Calu3 (cell line): ENCODE measurements at regions of chr10 and their contacts with region 1.

Region 1: DNA sequence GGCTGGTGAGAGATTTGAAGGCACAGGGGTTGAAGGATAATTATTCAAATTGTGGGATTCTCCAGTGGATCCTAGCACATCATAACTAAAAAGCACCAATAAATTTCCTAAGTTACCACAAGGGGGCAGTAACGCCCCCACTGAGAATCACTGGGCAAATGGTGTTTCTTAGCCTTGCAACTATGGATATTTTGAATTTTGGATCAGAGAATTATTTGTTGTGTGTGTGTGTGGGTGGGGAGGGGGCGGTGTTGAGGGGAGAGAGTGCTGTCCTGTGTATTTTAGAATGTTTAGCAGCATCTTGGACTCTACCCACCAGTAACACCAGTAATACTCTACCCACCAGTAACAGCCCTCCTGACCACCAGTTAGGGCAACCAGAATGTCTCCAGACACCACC is 63.3 kb upstream of the PRKG1 start:
- DNase-seq: peak; percentile 33
- H3K4me3 Mint-ChIP-seq: no peak overlapping the region
- H3K27ac Mint-ChIP-seq: no peak overlapping the region
- H3K4me1 Mint-ChIP-seq: no peaks in the 10 kb centered on the region
- H3K27me3 Mint-ChIP-seq: peaks cover 15% of the 10 kb centered on the region
- CTCF ChIP-seq: peak; percentile 73

Region 2: DNA sequence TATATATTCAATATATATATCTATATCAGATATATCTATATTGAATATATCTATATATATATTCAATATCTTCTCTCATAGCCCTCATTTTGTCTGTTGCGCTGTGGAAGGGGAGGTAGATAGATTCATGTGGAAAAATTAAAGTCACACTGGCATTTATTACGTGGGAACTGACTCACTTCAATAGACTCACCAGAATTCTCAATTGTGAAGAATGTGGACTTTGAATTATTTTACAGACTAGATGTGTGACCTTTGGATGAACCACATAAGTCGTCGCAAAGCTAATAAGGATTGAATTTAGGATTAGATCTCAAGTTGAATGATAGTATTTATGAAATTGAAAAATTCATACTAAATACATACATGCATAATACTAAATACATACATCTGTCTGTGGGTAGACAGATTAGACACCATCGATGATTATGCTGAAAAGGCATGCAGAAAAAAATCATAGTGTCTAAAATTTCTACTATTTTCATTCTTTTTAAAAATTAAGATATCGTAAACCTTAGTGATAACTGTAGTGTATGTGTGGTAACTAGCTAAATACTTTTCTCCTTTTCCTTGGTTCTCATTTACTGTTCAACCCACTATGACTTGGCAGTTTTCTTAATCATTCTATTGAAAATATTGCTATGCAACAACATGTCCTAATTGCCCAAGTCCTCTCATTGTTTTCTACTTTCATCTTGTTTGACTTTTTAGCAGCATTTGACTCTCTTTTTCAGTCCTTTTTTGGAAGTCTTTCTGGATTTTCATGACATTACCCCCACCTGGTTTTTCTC is 63.8 kb before region 1 on chr10:
- CTCF ChIA-PET with region 1: no interaction called
- intact Hi-C with region 1: no loop called
- DNase-seq: no peak
- H3K4me3 Mint-ChIP-seq: no peak overlapping the region
- H3K27ac Mint-ChIP-seq: no peak overlapping the region
- H3K4me1 Mint-ChIP-seq: no peaks in the 10 kb centered on the region
- H3K27me3 Mint-ChIP-seq: peaks cover 14% of the 10 kb centered on the region
- CTCF ChIP-seq: no peak

Region 3: DNA sequence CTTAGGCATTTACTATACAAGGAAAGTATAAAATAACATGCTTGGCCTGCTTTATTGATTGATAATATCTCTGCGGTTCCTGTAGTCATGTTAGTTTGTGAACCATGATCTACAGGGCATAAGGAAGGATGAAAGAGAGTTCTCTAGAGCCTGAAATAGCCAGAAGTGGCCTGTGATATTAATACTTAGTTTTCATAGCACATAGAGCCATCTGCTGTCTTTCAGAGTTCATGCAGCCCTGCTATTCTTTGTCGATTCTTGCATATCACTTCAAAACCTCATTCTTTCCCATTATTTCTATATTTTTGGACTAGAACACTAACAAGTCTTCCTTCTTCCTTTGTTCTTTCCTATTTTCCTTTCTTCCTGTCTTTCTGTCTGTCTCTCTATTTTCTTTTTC is 36.9 kb after region 1 on chr10:
- CTCF ChIA-PET with region 1: no interaction called
- intact Hi-C with region 1: loop called (anchors 1 kb)
- DNase-seq: no peak
- H3K4me3 Mint-ChIP-seq: no peak overlapping the region
- H3K27ac Mint-ChIP-seq: no peak overlapping the region
- H3K4me1 Mint-ChIP-seq: peaks cover 9% of the 10 kb centered on the region
- H3K27me3 Mint-ChIP-seq: peaks cover 16% of the 10 kb centered on the region
- CTCF ChIP-seq: no peak